K562 (cell line): ENCODE measurements at regions of chr13 and their contacts with region 1.

Region 1: GRCh38 chr13:110225609-110226562 is 81.1 kb downstream of the COL4A1 start:
- DNase-seq: no peak
- ATAC-seq: no peak
- H3K4me3 ChIP-seq: no peak overlapping the region
- H3K27ac ChIP-seq: no peak overlapping the region
- H3K4me1 ChIP-seq: 0 out of 5 replicates have a peak, but pooled peaks cover 0 to 3% of the 10 kb centered on the region in 2 experiments
- H3K27me3 ChIP-seq: peaks cover 0 to 16% of the 10 kb centered on the region in 2 experiments; a peak in 1 of 5 replicates
- CTCF ChIP-seq: no peak
- EP300 ChIP-seq: no peak
- POLR2A ChIP-seq: no peak
- RAD21 ChIP-seq: no peak

Region 2: GRCh38 chr13:109922518-109922917 is 303.4 kb before region 1 on chr13:
- CTCF ChIA-PET with region 1: no interaction called
- POLR2A ChIA-PET with region 1: no interaction called
- in situ Hi-C with region 1: no loop called
- intact Hi-C with region 1: no loop called
- DNase-seq: no peak
- ATAC-seq: no peak
- H3K4me3 ChIP-seq: no peak overlapping the region
- H3K27ac ChIP-seq: no peak overlapping the region
- H3K4me1 ChIP-seq: no peaks in the 10 kb centered on the region; a peak in 1 of 5 replicates
- H3K27me3 ChIP-seq: peaks cover 0 to 5% of the 10 kb centered on the region in 2 experiments; a peak in 1 of 5 replicates
- CTCF ChIP-seq: no peak
- EP300 ChIP-seq: no peak
- POLR2A ChIP-seq: no peak
- RAD21 ChIP-seq: no peak

Region 3: GRCh38 chr13:110274687-110275086 is 48.8 kb after region 1 on chr13:
- CTCF ChIA-PET with region 1: no interaction called
- POLR2A ChIA-PET with region 1: no interaction called
- in situ Hi-C with region 1: no loop called
- intact Hi-C with region 1: no loop called
- DNase-seq: no peak
- ATAC-seq: no peak
- H3K4me3 ChIP-seq: no peak overlapping the region
- H3K27ac ChIP-seq: no peak overlapping the region
- H3K4me1 ChIP-seq: no peaks in the 10 kb centered on the region
- H3K27me3 ChIP-seq: peaks cover 3 to 14% of the 10 kb centered on the region in 2 experiments; a peak in 4 of 5 replicates
- CTCF ChIP-seq: no peak
- EP300 ChIP-seq: no peak
- POLR2A ChIP-seq: no peak
- RAD21 ChIP-seq: no peak

Region 4: DNA sequence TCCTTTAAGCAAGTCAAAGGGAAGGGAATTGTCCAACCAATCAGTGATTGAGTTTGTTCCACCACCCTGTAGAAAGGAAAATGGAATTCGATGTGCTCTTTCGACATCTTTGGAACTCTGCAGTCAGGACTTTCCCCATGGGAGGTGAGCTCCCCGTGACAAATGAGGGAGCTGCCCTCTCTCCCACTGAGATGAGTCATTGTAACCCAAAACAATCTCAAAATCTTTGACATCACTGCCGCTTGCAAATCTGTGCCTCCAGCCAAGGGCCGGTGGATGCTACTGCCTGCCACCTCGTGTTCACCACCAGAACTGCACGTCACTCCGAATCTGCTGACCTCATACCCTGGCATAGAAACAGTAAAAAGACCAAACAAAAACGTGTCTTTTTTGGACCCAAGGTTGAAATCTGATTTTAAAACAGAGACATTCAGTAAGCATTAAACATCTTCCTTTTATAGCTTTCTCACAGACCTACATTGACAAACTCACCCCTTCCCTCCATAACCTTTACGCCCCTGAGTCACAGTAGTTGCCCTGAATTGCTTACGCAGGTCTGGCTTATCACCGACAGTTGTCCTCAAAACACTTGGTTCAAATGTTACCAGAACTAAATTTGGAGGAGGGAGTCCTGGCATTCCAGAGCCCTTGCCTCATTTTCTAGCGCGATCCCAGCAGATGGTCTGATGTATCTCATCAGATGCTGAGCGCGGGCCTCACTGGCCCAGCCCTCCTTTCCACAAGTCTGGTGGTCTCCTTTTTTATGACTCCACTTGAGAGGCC is 186.4 kb after region 1 on chr13:
- CTCF ChIA-PET with region 1: interaction called, 5 read pairs
- POLR2A ChIA-PET with region 1: no interaction called
- in situ Hi-C with region 1: no loop called
- intact Hi-C with region 1: loop called (anchors 1 kb)
- DNase-seq: peak; percentile 68 to 78 (median 74)
- ATAC-seq: peak; percentile 96
- H3K4me3 ChIP-seq: no peak overlapping the region
- H3K27ac ChIP-seq: no peak overlapping the region
- H3K4me1 ChIP-seq: no peaks in the 10 kb centered on the region
- H3K27me3 ChIP-seq: peaks cover 12 to 49% of the 10 kb centered on the region in 2 experiments; a peak in 4 of 5 replicates
- CTCF ChIP-seq: peak; percentile 74 to 84 (median 78)
- EP300 ChIP-seq: no peak
- POLR2A ChIP-seq: no peak
- RAD21 ChIP-seq: peak; percentile 35 to 68

Region 5: GRCh38 chr13:110444226-110444653 is 218.4 kb after region 1 on chr13:
- CTCF ChIA-PET with region 1: interaction called, 3 read pairs
- POLR2A ChIA-PET with region 1: interaction called, 3 read pairs
- in situ Hi-C with region 1: no loop called
- intact Hi-C with region 1: loop called (anchors 2 kb)
- DNase-seq: peak in 1 of 4 experiments; percentile 15
- ATAC-seq: peak; percentile 55; the same call in 2 of the 3 replicates
- H3K4me3 ChIP-seq: no peak overlapping the region
- H3K27ac ChIP-seq: no peak overlapping the region
- H3K4me1 ChIP-seq: no peaks in the 10 kb centered on the region
- H3K27me3 ChIP-seq: peaks cover 34 to 63% of the 10 kb centered on the region in 2 experiments
- CTCF ChIP-seq: peak in 2 of 3 experiments; percentile 48 to 55; a peak in 3 of 6 replicates
- EP300 ChIP-seq: no peak
- POLR2A ChIP-seq: no peak
- RAD21 ChIP-seq: peak; percentile 40 to 54